HEK293 (cell line): ENCODE measurements at regions of chr6 and their contacts with region 1.

Region 1: GRCh38 chr6:15260099-15260821 is 14.4 kb downstream of the JARID2 start:
- H3K4me3 ChIP-seq: no peak overlapping the region
- H3K27ac ChIP-seq: peak overlapping the region; percentile 56
- H3K4me1 ChIP-seq: peaks cover 64% of the 10 kb centered on the region
- CTCF ChIP-seq: no peak

Region 2: GRCh38 chr6:14964515-14965270 is 295.6 kb before region 1 on chr6:
- CTCF ChIA-PET with region 1: no interaction called
- POLR2A ChIA-PET with region 1: interaction called, 11 read pairs
- H3K4me3 ChIP-seq: no peak overlapping the region
- H3K27ac ChIP-seq: no peak overlapping the region
- H3K4me1 ChIP-seq: 0 out of 2 replicates have a peak, but pooled peaks cover 2% of the 10 kb centered on the region
- CTCF ChIP-seq: no peak

Region 3: DNA sequence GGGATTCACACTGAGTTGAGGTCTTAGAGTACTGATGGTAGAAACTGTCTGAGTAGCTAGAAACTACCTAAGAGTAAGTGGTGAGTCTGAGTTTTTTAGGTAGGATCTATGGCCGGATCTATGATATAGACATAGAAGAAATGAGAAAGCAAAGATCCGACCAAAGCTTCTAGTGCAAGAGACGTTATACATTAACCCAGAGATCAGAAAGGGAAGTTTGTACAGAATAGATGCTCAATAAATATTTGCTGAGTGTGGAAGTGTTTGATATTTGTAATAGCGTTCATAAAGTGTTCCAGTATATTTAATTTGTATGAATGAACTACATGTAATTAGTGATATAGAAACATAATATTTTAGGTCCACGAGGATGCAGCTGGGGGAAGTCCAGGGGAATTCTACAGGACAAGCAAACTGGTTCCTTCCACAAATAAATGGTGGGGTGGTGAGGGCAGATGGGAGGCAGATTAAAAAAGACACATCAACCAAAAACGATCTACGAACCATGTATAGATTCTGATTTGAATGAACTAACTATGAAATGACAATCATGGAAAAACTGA is 46.3 kb before region 1 on chr6:
- CTCF ChIA-PET with region 1: no interaction called
- POLR2A ChIA-PET with region 1: no interaction called
- H3K4me3 ChIP-seq: no peak overlapping the region
- H3K27ac ChIP-seq: no peak overlapping the region
- H3K4me1 ChIP-seq: no peaks in the 10 kb centered on the region
- CTCF ChIP-seq: no peak

Region 4: DNA sequence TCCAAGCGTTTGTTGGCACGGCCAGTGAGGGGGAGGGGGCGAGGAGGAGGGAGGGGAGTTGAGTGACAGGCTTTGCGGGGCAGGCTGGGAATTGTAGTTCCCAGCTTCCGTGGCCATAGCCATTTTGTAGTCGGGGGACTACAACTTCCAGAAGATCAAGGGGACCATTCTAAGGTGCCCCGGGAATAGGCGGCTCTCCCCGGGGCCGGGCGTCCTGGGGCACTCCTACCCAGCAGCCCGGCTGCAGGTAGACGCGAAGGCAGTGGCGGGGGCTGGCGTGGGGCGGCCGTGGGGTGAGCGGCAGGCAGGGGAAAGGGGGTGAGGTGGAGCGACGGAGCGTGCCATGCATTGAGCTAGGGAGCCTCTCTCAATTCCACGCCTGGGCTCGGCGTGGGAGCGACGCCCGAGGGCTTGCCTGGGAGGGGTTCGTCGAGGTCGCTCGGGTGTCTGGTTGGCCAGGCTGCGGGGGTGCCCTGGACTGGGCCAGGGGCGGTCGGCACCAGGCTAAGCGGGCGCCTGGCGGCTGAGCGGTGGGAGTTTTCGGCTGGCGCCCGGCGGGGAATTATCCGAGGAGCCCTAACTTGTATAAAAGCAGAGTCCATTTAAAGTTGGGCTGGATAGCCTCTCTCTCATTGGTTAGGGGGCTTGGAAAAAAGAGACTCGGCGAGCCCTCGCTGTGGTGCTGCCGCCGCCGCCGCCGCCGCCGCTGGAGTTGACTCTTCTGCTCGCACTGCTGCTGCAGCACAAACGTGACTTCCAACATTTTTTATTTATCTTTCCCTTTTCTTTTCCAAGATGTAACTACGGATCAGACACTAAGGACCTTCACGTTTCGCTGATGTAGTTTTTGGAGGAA is 14.7 kb before region 1 on chr6 and contains the start of gene JARID2:
- CTCF ChIA-PET with region 1: no interaction called
- POLR2A ChIA-PET with region 1: interaction called, 12 read pairs
- H3K4me3 ChIP-seq: peak within 1 kb of the TSS; percentile 96
- H3K27ac ChIP-seq: peak within 1 kb of the TSS; percentile 97
- H3K4me1 ChIP-seq: peaks cover 9% of the 10 kb centered on the region
- CTCF ChIP-seq: peak; percentile 25; the same call in 1 of the 2 replicates